ENCODE measurements at regions of chr6 and their contacts with region 1.

Region 1: DNA sequence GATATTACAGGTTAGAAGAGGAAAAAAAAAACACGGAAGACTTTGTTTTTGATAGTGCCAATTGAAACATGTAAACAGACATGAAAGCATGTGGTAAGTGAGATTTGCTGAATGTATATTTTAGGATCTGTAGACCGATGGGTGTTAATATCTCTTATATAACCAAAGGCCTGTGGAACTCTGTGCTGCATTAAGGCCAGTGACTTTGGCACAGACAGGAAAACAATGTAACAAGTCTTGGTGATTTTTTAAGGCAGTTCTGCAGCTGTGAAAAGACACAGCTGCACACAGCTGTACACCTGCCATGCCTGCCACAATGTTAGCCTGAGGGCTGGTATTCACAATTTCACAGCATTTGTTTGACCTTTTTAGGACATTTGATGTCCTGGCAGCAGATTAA is 6.1 kb downstream of the SOBP start:
- DNase-seq: no peak
- ATAC-seq: no peak
- H3K4me3 Mint-ChIP-seq: no peak overlapping the region
- H3K27ac Mint-ChIP-seq: no peak overlapping the region
- H3K4me1 Mint-ChIP-seq: peaks cover 7% of the 10 kb centered on the region
- H3K27me3 Mint-ChIP-seq: peaks cover 1% of the 10 kb centered on the region
- CTCF ChIP-seq: no peak

Region 2: DNA sequence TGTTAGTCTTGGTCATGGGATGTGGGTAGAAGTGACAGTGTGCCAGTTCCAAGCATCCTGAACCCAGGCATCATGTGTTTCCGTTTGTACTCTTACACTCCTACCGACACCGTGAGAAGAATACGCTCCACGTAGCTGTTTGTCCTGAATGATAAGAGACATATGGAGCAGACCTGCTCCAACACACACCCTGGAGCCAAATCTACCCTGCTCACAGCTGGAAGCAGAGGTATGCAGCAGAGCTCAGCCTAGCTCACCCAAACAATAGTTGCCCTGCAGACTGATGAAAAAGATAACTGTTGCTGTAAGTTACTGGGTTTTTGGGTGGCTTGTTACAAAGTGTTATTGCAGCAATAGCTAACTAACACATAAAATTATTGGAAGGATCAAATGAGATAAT is 22.3 kb before region 1 on chr6:
- CTCF ChIA-PET with region 1: no interaction called
- POLR2A ChIA-PET with region 1: no interaction called
- intact Hi-C with region 1: no loop called
- DNase-seq: no peak
- ATAC-seq: no peak
- H3K4me3 Mint-ChIP-seq: no peak overlapping the region
- H3K27ac Mint-ChIP-seq: no peak overlapping the region
- H3K4me1 Mint-ChIP-seq: no peaks in the 10 kb centered on the region
- H3K27me3 Mint-ChIP-seq: peaks cover 11% of the 10 kb centered on the region
- CTCF ChIP-seq: no peak

Region 3: GRCh38 chr6:107550241-107550840 is 54.4 kb after region 1 on chr6:
- CTCF ChIA-PET with region 1: no interaction called
- POLR2A ChIA-PET with region 1: no interaction called
- intact Hi-C with region 1: loop called (anchors 2 kb)
- DNase-seq: no peak
- ATAC-seq: peak; percentile 72
- H3K4me3 Mint-ChIP-seq: peak overlapping the region; percentile 38
- H3K27ac Mint-ChIP-seq: peak overlapping the region; percentile 35
- H3K4me1 Mint-ChIP-seq: peaks cover 18% of the 10 kb centered on the region
- H3K27me3 Mint-ChIP-seq: no peaks in the 10 kb centered on the region
- CTCF ChIP-seq: no peak

Region 4: DNA sequence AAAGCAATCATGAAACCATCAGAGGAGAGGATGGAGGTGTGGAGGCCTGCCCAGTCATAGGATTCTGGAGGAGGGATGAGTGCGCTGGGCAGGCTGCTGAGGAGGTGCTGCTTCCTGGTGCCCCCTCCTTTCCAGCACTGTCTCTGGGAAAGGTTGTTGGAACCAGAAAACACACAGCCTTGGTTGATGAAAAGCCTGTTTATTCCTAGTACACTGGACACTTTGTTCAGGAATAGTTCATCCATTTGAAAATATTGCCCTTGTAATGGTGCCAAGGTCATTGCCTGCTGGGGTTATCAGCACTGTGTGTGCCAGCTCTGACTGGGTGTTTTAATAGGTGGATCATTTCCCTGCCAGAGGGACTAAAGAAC is 1268.6 kb after region 1 on chr6:
- CTCF ChIA-PET with region 1: no interaction called
- POLR2A ChIA-PET with region 1: no interaction called
- intact Hi-C with region 1: no loop called
- DNase-seq: no peak
- ATAC-seq: no peak
- H3K4me3 Mint-ChIP-seq: no peak overlapping the region
- H3K27ac Mint-ChIP-seq: no peak overlapping the region
- H3K4me1 Mint-ChIP-seq: peaks cover 5% of the 10 kb centered on the region
- H3K27me3 Mint-ChIP-seq: peaks cover 9% of the 10 kb centered on the region
- CTCF ChIP-seq: no peak

Measured in activated B cell treated with CpG ODN at 0.5 μM for 24 hours (primary cell).